ENCODE measurements at regions of chr11 and their contacts with region 1.

Region 1: DNA sequence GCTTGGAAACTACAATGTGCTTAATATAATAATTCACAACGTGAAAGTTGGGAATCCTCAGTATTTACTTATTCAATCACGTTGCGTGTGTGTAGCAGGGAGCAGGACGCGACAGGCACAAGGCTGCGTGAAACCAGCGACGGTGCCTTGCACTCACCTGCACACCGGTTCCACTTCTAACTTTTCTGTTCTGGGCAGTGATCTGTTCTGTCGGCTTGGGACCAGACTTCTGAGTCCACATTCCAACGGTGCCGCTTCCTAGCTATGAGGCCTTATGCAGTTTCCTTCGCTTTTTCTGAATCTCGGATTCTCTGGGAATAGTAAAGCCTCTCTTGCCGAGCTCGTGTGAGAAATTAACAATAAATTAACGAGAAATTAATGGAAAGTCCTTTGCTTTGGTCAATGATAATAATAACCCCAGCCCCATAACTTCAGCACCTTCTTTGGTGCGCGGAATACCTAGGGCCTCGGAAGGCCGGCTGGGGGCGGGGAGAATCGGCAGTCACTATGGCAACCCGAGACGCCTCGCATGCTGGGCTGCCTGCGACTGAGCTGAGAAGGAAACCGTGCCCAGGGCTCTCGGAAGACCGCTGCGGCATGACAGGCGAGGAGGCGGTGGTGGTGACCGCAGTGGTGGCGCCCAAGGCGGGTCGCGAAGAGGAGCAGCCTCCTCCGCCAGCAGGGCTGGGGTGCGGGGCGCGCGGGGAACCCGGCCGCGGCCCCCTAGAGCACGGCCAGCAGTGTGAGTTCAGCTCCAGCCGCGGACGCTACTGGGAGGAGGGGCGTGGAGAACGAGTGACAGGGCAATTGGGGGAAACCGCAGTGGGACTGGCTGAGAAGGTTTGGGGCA is at the start of gene C11orf97:
- DNase-seq: peak; percentile 57
- CTCF ChIP-seq: no peak

Region 2: GRCh38 chr11:93921695-93922468 is 590.3 kb before region 1 on chr11:
- in situ Hi-C with region 1: loop called (anchors 25 kb)
- DNase-seq: peak; percentile 55
- CTCF ChIP-seq: peak; percentile 64

Region 3: GRCh38 chr11:94673951-94674491 is 161.9 kb after region 1 on chr11:
- in situ Hi-C with region 1: no loop called
- DNase-seq: no peak
- CTCF ChIP-seq: no peak